Dendritic cell treated with granulocyte-macrophage colony-stimulating factor and Interleukin-4, amounts not matched to agents 40 ng/mL and 50 ng/mL, for 4 days (primary cell): ENCODE measurements at regions of chr17 and their contacts with region 1.

Region 1: DNA sequence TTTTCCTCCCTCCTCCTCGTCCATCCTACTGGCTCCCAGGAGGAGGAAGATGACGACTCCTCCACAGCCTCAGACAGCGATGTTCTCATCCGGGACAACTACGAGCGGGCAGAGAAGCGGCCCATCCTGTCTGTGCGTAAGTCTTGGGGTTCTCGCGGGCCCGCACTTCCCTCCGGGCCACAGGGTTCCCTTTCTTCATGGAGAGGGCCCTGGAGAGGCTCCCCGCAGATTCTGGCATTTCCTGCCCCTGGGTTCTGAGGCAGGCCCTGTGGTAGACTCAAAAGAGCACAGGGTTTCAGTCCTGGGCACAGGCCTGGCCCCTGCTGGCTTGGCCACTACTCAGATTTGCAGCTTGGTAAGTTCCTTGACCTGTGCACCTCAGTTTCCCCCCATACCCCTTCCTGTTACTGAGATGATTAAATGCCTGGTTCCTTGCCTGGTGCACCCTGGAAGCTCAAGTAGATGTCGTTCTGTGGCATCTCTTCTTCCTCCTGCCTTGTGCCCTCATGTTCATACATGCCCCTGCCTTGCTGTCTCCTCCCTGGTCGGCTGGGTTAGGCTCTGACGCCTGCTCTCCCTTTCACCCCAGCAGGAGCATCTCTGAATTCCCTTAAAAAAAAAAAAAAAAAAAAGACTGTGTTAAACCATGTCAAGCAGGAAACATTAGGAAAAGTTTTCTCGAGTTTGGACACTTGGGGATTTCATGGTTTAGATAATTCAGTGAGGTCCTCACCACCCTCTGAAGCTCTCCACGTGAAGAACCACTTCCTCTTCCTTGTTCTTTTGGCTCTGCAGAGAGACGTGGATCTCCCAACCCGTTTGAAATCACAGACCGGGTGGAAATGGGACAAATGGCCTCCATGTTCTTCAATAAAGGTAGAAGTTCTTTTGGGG is 14.3 kb upstream of the NAT9 start:
- H3K4me3 Mint-ChIP-seq: peak overlapping the region; percentile 19
- H3K27ac Mint-ChIP-seq: peak overlapping the region; percentile 72
- H3K4me1 Mint-ChIP-seq: peaks cover 45% of the 10 kb centered on the region
- H3K27me3 Mint-ChIP-seq: no peaks in the 10 kb centered on the region

Region 2: DNA sequence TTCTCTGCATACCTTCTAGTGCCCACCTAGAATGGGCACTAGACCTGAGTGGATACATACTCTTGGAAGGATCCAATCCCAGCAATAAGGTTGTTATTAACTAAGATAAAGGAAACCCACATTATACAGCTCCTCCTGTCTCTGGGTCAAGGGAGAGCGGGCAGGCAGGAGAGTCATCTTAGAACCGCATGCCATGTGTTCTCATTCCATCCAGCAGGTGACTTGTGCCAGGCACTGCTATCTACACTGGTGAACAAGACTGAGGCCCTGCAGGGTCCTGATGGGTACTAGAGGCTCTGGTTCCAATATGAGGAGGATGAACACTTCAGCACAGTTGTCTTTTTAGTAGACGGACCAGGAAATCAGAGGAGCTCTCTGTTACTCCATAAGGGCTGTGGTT is 217.2 kb before region 1 on chr17:
- intact Hi-C with region 1: no loop called
- H3K4me3 Mint-ChIP-seq: no peak overlapping the region
- H3K27ac Mint-ChIP-seq: no peak overlapping the region
- H3K4me1 Mint-ChIP-seq: peaks cover 44% of the 10 kb centered on the region
- H3K27me3 Mint-ChIP-seq: peaks cover 40% of the 10 kb centered on the region

Region 3: DNA sequence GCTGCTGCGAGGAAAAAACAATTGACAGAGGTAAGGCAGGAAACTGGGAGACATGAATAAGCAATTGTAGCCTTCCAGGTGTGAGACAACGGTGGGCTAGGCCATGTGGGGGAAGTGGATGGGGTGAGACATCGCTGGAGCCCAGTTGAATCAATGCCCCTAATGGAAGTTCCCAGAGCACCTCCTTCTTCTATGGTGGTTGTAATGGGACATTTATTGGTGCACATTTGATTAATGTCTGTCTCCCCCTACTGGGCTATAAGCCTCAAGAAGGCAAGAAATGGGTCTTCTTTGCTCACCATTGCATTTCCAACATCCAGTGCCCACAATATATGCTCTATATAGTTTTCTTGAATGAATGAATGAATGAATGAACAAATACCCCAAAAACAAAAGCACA is 144.2 kb before region 1 on chr17:
- intact Hi-C with region 1: no loop called
- H3K4me3 Mint-ChIP-seq: no peak overlapping the region
- H3K27ac Mint-ChIP-seq: no peak overlapping the region
- H3K4me1 Mint-ChIP-seq: peaks cover 52% of the 10 kb centered on the region
- H3K27me3 Mint-ChIP-seq: peaks cover 69% of the 10 kb centered on the region

Region 4: DNA sequence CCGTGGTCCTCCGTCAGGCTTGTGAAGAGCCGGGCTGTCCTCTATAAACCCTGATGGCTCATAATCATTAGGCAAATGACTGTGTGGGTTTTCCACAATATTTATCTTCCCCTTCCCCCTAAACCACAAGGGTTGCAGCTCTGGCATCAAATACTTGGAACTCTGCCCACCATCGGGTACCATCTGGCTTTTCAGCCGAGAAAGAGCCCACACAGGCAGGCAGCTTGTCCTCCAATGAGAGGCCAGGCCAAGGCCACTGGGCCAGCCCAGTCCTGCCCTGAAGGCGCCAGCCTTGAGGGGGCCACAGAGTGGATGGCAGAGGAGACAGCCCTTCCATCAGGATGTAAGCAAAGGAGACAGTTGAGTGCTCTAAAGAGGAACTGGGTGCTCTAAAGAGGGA is 17.5 kb after region 1 on chr17:
- intact Hi-C with region 1: no loop called
- H3K4me3 Mint-ChIP-seq: no peak overlapping the region
- H3K27ac Mint-ChIP-seq: no peak overlapping the region
- H3K4me1 Mint-ChIP-seq: peaks cover 65% of the 10 kb centered on the region
- H3K27me3 Mint-ChIP-seq: peaks cover 15% of the 10 kb centered on the region

Region 5: GRCh38 chr17:74864866-74865395 is 74.5 kb after region 1 on chr17:
- intact Hi-C with region 1: loop called (anchors 1 kb)
- H3K4me3 Mint-ChIP-seq: no peak overlapping the region
- H3K27ac Mint-ChIP-seq: no peak overlapping the region
- H3K4me1 Mint-ChIP-seq: peaks cover 33% of the 10 kb centered on the region
- H3K27me3 Mint-ChIP-seq: peaks cover 50% of the 10 kb centered on the region